Dorsolateral prefrontal cortex (tissue), 120 donors: ENCODE measurements at regions of chr17 and their contacts with region 1.

Region 1: DNA sequence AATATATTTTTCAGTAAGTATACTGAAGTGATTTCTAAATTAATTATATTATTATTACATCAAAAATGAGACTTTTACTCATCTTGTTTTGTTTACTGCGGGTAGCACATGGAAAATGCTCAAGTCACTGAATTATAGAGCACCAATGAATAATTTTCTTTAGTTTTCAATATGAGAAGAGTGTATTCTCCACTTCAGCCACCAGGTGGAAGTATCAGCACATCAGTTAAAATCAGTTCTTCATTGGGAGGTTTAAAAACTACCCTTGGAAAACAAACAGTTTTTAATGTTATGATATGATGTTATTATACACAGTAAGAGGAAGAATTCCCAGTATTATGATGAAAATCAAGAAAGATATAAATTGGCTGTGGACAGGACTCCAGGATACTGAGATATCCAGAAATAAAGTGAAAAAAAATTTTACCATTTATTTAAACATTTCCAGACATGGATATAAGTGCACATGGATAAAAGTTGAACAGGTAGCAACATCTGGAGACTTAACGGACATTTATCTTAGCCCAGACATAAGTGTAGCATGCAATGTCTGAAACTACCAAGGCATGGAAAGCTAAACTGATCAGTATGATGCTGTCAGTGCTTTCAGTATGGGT is 467.3 kb downstream of the KCNJ2 start:
- DNase-seq: no peak
- H3K4me3 ChIP-seq: peak overlapping the region in 1 of 59 donors; percentile 22
- H3K27ac ChIP-seq: peak overlapping the region in 5 of 59 donors; percentile 2 to 28 (median 13)
- H3K27me3 ChIP-seq: no peaks in the 10 kb centered on the region
- CTCF ChIP-seq: peak; percentile 80 to 99 (median 93)

Region 2: GRCh38 chr17:70716551-70716950 is 79.9 kb after region 1 on chr17:
- intact Hi-C with region 1: loop called in 1 of 2 experiments (anchors 5 kb)
- DNase-seq: no peak
- H3K4me3 ChIP-seq: no peak overlapping the region
- H3K27ac ChIP-seq: no peak overlapping the region
- H3K27me3 ChIP-seq: no peaks in the 10 kb centered on the region
- CTCF ChIP-seq: peak in 35 of 56 donors; percentile 8 to 60 (median 28)

Region 3: DNA sequence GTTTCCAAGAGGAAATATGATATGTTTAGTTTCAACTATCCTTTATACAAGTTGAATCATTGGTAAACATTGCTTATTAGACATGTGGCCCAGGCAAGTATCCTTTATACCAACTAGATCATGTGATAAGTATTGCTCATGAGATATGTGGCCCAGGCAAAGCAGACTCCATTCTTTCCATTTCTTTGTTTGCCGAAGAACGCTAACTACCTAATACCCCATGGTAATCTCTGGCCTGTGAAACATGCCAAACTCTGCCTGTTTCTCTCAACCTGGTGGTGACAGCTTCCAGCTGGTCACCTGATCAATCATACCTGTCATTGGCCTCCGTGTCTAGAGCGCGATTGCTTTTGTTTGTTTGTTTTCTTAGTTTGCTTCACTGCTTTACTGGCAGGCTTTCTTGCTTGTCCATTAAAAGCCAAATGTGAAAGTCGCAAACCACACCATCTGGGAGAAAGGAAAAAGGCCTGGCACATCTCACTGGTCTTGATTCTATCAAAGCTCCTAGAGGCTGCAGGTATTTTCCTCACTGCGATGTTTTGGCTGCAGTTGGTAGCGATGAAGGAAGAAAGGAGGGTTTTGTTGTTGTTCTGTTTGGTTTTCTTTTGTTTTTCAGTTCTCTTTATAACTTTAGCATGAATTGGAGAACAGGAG is 218.9 kb after region 1 on chr17:
- intact Hi-C with region 1: no loop called
- DNase-seq: no peak
- H3K4me3 ChIP-seq: no peak overlapping the region
- H3K27ac ChIP-seq: no peak overlapping the region
- H3K27me3 ChIP-seq: no peaks in the 10 kb centered on the region
- CTCF ChIP-seq: no peak

Region 4: GRCh38 chr17:71084219-71084618 is 447.6 kb after region 1 on chr17:
- intact Hi-C with region 1: loop called in 1 of 2 experiments (anchors 10 kb)
- DNase-seq: peak in 1 of 10 donors; percentile 28
- H3K4me3 ChIP-seq: no peak overlapping the region
- H3K27ac ChIP-seq: no peak overlapping the region
- H3K27me3 ChIP-seq: no peaks in the 10 kb centered on the region
- CTCF ChIP-seq: peak in 42 of 56 donors; percentile 8 to 57 (median 29)